Breast epithelium (tissue), 4 donors: ENCODE measurements at regions of chr2 and their contacts with region 1.

Region 1: GRCh38 chr2:126889496-126890135 is 9.1 kb upstream of the TEX51 start:
- DNase-seq: peak in 1 of 2 donors; percentile 9
- H3K4me3 ChIP-seq: no peak overlapping the region
- H3K27ac ChIP-seq: no peak overlapping the region
- H3K4me1 ChIP-seq: no peaks in the 10 kb centered on the region
- H3K27me3 ChIP-seq: no peaks in the 10 kb centered on the region
- CTCF ChIP-seq: no peak
- POLR2A ChIP-seq: no peak

Region 2: GRCh38 chr2:126863336-126864015 is 26.1 kb before region 1 on chr2:
- intact Hi-C with region 1: no loop called
- DNase-seq: no peak
- H3K4me3 ChIP-seq: no peak overlapping the region
- H3K27ac ChIP-seq: no peak overlapping the region
- H3K4me1 ChIP-seq: no peaks in the 10 kb centered on the region
- H3K27me3 ChIP-seq: no peaks in the 10 kb centered on the region
- CTCF ChIP-seq: no peak
- POLR2A ChIP-seq: no peak

Region 3: DNA sequence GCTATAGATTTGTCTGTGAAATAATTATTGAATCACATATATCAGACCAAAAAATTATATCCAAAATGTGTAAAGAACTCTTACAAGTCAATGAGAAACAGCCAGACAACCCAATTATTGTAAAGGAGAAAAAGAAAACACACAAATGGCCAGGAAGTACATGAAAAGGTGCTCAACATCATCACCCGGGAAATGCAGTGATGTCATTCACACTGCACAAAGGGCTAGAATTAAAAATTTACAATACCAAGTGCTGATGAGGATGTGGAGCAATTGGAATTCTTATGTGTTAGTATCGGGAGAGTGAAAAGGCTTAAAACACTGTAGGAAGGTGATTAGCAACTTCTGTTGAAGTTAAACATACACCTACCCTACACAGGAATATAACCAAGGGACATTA is 15.6 kb before region 1 on chr2:
- intact Hi-C with region 1: loop called (anchors 1 kb)
- DNase-seq: no peak
- H3K4me3 ChIP-seq: no peak overlapping the region
- H3K27ac ChIP-seq: no peak overlapping the region
- H3K4me1 ChIP-seq: no peaks in the 10 kb centered on the region
- H3K27me3 ChIP-seq: no peaks in the 10 kb centered on the region
- CTCF ChIP-seq: no peak
- POLR2A ChIP-seq: no peak

Region 4: DNA sequence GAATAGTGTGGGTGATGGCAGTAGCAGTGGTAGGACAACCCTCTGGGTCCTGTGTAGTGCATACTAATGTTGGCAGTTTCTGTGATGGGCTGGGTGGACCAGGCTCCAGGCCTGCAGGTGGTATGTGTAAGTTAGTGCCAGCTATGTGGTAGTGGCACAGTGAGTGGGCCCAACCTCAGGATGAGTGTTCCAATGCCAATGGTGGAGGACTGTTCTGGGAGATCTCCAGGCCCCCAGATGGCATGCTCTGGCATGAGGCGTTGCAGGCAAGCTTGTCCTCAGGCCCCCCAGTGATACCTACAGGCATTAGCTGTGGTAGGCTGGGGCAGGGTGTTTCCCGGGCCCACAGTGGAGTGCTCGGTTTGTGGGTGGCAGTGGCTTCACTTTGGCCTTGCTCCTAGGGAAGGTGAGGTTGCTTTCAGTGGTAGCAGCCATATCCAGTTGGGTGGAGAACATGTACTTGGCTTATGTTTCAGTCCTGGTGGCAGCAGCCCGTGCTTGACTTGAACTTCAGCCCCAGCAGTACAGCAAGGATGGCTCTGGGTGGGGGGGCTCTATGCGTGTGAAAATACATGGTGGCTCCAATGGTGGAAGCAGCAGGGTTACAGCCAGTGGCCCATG is 41.5 kb after region 1 on chr2:
- intact Hi-C with region 1: no loop called
- DNase-seq: no peak
- H3K4me3 ChIP-seq: no peak overlapping the region
- H3K27ac ChIP-seq: no peak overlapping the region
- H3K4me1 ChIP-seq: no peaks in the 10 kb centered on the region
- H3K27me3 ChIP-seq: peaks cover 0 to 6% of the 10 kb centered on the region in 2 donors
- CTCF ChIP-seq: no peak
- POLR2A ChIP-seq: no peak